CD8-positive, alpha-beta T cell (primary cell): ENCODE measurements at regions of chr9 and their contacts with region 1.

Region 1: GRCh38 chr9:82560457-82560904 is 502.5 kb downstream of the RASEF start:
- DNase-seq: no peak
- ATAC-seq: no peak
- H3K4me3 ChIP-seq: no peak overlapping the region
- H3K4me3 Mint-ChIP-seq: no peak overlapping the region
- H3K27ac ChIP-seq: no peak overlapping the region
- H3K27ac Mint-ChIP-seq: no peak overlapping the region
- H3K4me1 ChIP-seq: no peaks in the 10 kb centered on the region
- H3K4me1 Mint-ChIP-seq: no peaks in the 10 kb centered on the region
- H3K27me3 ChIP-seq: no peaks in the 10 kb centered on the region
- H3K27me3 Mint-ChIP-seq: no peaks in the 10 kb centered on the region
- CTCF ChIP-seq: no peak

Region 2: GRCh38 chr9:81609782-81610739 is 950.4 kb before region 1 on chr9:
- CTCF ChIA-PET with region 1: no interaction called
- POLR2A ChIA-PET with region 1: no interaction called
- intact Hi-C with region 1: loop called in 1 of 2 experiments (anchors 10 kb)
- DNase-seq: peak in 1 of 9 experiments; percentile 23
- ATAC-seq: no peak
- H3K4me3 ChIP-seq: no peak overlapping the region
- H3K4me3 Mint-ChIP-seq: no peak overlapping the region
- H3K27ac ChIP-seq: no peak overlapping the region
- H3K27ac Mint-ChIP-seq: no peak overlapping the region
- H3K4me1 ChIP-seq: no peaks in the 10 kb centered on the region
- H3K4me1 Mint-ChIP-seq: peaks cover 12% of the 10 kb centered on the region
- H3K27me3 ChIP-seq: no peaks in the 10 kb centered on the region
- H3K27me3 Mint-ChIP-seq: no peaks in the 10 kb centered on the region
- CTCF ChIP-seq: no peak

Region 3: DNA sequence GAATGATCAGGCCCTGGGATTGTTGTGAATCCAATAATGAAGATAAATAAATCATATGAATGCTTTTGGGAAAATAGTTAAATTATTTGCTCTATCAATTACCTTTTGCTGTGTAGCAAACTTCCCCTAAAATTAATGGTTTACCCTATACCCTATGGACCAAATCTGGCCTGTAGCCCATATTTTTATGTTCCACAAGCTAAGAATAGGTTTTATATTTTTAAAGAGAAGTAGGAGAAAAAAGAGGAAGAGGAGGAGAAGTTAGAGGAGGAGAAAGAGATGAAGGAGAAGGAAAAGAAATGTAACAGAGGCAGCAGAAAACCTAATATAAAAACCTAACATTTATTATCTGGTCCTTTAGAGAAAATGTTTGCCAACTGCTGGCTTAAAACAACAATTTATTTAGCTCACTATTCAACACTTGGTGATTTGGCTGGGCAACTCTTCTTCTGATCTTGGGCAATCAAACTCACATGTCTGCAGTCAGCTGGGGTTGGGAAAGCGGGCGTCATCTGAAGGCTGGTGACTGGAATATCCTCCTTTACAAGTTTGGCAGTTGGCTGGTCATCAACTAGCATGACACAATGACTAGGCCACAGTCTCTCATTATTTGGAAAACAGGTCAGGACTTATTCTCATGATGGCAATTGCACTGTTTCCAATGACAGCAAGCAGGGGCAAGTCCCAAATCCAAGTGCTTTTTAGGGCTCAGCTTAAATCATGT is 20.5 kb before region 1 on chr9:
- CTCF ChIA-PET with region 1: no interaction called
- POLR2A ChIA-PET with region 1: no interaction called
- intact Hi-C with region 1: no loop called
- DNase-seq: no peak
- ATAC-seq: no peak
- H3K4me3 ChIP-seq: no peak overlapping the region
- H3K4me3 Mint-ChIP-seq: no peak overlapping the region
- H3K27ac ChIP-seq: no peak overlapping the region
- H3K27ac Mint-ChIP-seq: no peak overlapping the region
- H3K4me1 ChIP-seq: no peaks in the 10 kb centered on the region
- H3K4me1 Mint-ChIP-seq: no peaks in the 10 kb centered on the region
- H3K27me3 ChIP-seq: no peaks in the 10 kb centered on the region
- H3K27me3 Mint-ChIP-seq: no peaks in the 10 kb centered on the region
- CTCF ChIP-seq: no peak

Region 4: DNA sequence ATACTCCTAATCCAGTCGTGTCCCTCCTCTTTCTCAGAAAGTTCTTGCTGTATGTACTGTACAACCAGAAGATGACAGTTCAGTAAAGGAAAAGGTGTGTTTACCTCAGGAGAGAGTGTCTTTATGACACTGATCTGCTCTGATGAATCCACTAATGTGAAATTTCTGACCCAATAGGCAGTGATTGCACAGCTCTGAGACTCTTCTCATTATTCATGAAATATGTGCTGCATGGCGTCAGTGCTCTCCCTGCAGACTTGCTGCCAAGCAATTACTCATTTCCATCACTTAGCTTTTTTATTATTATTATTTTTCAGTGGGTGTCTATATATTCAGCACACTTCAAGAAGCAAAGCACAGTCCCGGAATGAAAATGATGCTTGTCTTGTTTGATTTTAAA is 113.4 kb after region 1 on chr9:
- CTCF ChIA-PET with region 1: no interaction called
- POLR2A ChIA-PET with region 1: no interaction called
- intact Hi-C with region 1: no loop called
- DNase-seq: no peak
- ATAC-seq: no peak
- H3K4me3 ChIP-seq: no peak overlapping the region
- H3K4me3 Mint-ChIP-seq: no peak overlapping the region
- H3K27ac ChIP-seq: no peak overlapping the region
- H3K27ac Mint-ChIP-seq: no peak overlapping the region
- H3K4me1 ChIP-seq: no peaks in the 10 kb centered on the region
- H3K4me1 Mint-ChIP-seq: no peaks in the 10 kb centered on the region
- H3K27me3 ChIP-seq: no peaks in the 10 kb centered on the region
- H3K27me3 Mint-ChIP-seq: no peaks in the 10 kb centered on the region
- CTCF ChIP-seq: no peak

Region 5: DNA sequence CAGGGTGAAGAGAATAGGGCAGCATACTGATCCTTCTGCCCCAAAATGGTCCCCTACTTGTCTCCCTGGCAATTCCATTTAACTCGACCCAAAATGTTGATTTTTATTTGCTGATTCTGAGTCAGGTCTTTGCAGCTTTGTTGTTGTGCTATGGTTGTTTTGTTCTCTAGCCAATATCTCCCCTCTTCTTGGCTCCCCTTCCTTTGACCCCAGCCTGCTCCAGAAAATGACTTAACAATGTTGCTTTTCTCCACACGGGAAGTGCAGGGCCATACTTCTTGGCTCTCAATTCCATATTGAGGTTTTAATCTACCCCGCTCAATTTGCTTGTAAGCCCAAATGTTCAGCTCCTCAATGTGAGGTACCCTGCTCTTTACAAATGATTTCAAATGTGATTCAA is 172.4 kb after region 1 on chr9:
- CTCF ChIA-PET with region 1: no interaction called
- POLR2A ChIA-PET with region 1: no interaction called
- intact Hi-C with region 1: no loop called
- DNase-seq: no peak
- ATAC-seq: no peak
- H3K4me3 ChIP-seq: no peak overlapping the region
- H3K4me3 Mint-ChIP-seq: no peak overlapping the region
- H3K27ac ChIP-seq: no peak overlapping the region
- H3K27ac Mint-ChIP-seq: no peak overlapping the region
- H3K4me1 ChIP-seq: no peaks in the 10 kb centered on the region
- H3K4me1 Mint-ChIP-seq: no peaks in the 10 kb centered on the region
- H3K27me3 ChIP-seq: no peaks in the 10 kb centered on the region
- H3K27me3 Mint-ChIP-seq: no peaks in the 10 kb centered on the region
- CTCF ChIP-seq: no peak